Dorsolateral prefrontal cortex (tissue), 120 donors: ENCODE measurements at regions of chr10 and their contacts with region 1.

Region 1: DNA sequence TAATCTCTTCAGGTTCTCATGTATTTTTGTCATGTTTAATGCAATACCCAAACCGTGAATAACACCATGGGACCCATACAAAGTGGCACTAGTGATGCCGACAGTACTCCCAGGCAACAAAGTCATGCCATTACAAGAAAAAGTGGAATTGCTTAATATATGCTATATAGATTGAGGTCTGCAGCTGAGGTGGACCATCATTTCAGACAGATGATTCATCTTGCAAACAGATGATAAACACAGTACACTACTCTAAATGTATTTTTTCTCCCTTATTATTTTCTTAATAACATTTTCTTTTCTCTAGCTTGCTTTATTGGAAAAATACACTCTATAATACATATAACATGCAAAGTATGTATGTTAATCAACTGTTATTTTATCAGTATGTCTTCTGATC is 14.6 kb upstream of the PCDH15 start:
- DNase-seq: no peak
- H3K4me3 ChIP-seq: no peak overlapping the region
- H3K27ac ChIP-seq: no peak overlapping the region
- H3K27me3 ChIP-seq: peaks cover 0 to 4% (median 0%) of the 10 kb centered on the region in 45 donors
- CTCF ChIP-seq: no peak

Region 2: GRCh38 chr10:54905578-54906192 is 90.1 kb after region 1 on chr10:
- intact Hi-C with region 1: no loop called
- DNase-seq: no peak
- H3K4me3 ChIP-seq: no peak overlapping the region
- H3K27ac ChIP-seq: no peak overlapping the region
- H3K27me3 ChIP-seq: peaks cover 0 to 3% (median 0%) of the 10 kb centered on the region in 45 donors
- CTCF ChIP-seq: no peak

Region 3: GRCh38 chr10:55174419-55174818 is 358.8 kb after region 1 on chr10:
- intact Hi-C with region 1: no loop called
- DNase-seq: no peak
- H3K4me3 ChIP-seq: no peak overlapping the region
- H3K27ac ChIP-seq: no peak overlapping the region
- H3K27me3 ChIP-seq: no peaks in the 10 kb centered on the region
- CTCF ChIP-seq: no peak

Region 4: GRCh38 chr10:55203319-55203718 is 387.7 kb after region 1 on chr10:
- intact Hi-C with region 1: loop called in 1 of 2 experiments (anchors 5 kb)
- DNase-seq: no peak
- H3K4me3 ChIP-seq: no peak overlapping the region
- H3K27ac ChIP-seq: no peak overlapping the region
- H3K27me3 ChIP-seq: peaks cover 0 to 4% (median 0%) of the 10 kb centered on the region in 45 donors
- CTCF ChIP-seq: no peak